AG04450 (cell line): ENCODE measurements at regions of chr14 and their contacts with region 1.

Region 1: GRCh38 chr14:93173943-93174395 is 10.7 kb downstream of the MOAP1 start:
- DNase-seq: no peak
- H3K4me3 ChIP-seq: no peak overlapping the region
- H3K27ac ChIP-seq: no peak overlapping the region
- H3K27me3 ChIP-seq: no peaks in the 10 kb centered on the region
- CTCF ChIP-seq: no peak

Region 2: DNA sequence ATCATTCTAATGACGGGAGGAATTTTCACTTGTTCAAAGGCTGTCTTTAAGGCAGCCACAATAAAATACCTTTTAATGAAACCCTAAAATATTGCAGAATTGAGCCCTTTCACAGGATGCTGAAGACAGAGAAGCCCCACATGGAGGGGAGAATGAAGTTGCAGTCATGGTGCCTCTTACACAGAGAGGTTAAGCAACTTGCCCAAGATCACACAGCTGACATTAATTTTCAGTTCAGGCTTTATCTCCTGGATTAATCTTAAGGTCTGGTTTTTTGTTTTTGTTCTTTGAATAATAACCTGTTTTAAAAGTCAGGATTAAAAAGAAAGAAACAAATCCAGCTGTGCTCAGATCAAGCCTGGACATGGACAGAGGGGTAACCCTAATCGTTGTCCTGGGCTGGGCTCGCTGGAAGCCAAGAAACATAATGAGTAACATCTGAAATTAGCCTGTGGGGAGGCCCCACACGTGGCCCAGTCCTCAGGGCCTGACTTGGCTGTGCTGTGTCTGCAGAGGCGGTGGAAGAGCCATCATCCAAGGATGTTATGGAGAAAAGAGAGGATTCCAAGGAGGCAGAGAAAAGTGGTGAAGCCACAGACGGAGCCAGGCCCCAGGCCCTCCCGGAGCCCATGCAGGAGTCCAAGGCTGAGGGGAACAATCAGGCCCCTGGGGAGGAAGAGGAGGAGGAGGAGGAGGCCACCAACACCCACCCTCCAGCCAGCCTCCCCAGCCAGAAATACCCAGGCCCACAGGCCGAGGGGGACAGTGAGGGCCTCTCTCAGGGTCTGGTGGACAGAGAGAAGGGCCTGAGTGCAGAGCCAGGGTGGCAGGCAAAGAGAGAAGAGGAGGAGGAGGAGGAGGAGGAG is 243.0 kb before region 1 on chr14:
- CTCF ChIA-PET with region 1: no interaction called
- POLR2A ChIA-PET with region 1: no interaction called
- DNase-seq: no peak
- H3K4me3 ChIP-seq: no peak overlapping the region
- H3K27ac ChIP-seq: no peak overlapping the region
- H3K27me3 ChIP-seq: peaks cover 2% of the 10 kb centered on the region
- CTCF ChIP-seq: no peak

Region 3: DNA sequence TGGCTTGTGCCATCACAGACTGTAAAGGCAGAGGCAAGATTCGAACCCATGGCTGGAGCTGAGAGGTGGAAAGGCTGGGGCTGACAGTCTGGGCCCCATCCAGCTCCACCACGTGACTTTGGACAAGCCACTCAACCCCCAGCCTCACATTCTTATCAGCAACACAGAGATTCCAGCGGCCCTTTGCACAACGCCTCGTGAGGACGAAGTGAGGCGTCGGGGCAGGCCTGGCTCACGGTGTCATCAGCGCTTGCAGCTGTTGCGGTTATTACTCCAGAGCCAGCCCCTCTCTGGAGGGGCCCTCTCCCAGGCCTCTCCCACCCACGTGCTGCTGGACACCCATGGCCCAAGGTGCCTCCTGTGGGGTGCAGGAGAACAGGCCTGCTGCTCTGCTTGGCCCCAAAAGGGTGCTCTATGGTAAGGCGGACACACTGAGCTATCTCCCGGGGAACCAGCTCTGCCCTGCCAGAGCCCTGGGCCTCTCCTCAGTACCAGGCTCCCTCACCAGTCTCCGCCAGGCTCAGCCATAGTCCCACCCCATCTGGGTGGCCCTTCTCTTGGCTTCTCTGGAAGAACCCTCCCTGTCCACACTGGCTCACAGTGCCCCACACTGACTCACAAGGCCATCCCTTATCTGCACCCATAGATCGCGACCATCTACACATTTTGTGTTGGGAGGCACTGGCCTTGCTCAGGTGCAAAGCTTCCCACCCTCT is 230.0 kb before region 1 on chr14:
- CTCF ChIA-PET with region 1: interaction called, 4 read pairs
- POLR2A ChIA-PET with region 1: interaction called, 11 read pairs
- DNase-seq: no peak
- H3K4me3 ChIP-seq: no peak overlapping the region
- H3K27ac ChIP-seq: no peak overlapping the region
- H3K27me3 ChIP-seq: no peaks in the 10 kb centered on the region
- CTCF ChIP-seq: no peak

Region 4: DNA sequence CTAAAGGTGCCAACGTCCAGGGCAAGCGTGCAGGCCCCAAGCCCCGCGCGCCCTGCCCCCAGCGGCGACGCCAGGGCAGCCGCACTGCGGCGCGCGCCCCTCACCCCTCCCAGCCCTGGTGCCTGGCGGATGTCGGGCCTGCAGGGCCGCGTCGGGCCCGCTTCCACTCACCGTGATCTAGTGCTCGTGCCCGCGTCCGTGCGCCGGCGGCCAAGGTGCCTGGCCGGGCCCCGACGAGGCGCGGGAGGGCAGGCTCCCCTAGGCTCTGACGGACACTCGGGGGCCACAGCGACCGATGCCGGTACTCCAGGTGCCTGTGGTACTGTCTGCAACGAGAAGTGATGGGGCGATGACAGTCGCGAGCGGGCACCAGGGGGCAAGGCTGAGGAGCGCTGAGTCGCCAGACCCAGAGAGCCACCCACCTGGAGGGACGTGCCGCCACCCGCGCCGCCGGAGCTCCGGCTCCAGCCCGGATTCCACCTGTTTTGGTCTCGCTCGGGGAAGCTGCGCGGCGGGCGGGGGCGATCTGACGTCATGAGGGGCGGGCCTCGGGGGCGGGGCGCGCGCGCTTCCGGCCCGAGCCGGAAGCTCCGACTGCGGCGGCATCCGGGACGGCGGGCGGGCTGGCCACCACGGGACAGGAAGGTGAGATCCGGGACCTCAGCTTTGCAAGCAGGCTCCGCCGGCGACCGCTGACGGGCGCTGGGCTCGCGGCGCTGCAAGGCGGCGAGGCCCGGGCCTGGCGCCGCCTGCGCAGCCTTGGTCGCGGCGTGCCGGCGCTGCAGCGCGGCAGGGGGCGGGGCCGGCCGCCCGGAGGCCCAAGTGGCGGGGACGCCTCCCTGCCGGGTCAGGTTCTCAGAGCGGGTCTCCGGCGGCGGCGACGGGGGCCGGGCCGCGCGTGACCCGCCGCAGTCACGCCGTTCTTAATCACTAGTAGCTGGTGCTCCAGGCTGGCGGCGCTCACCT is 10.7 kb after region 1 on chr14 and contains the starts of genes LYSET and MOAP1:
- CTCF ChIA-PET with region 1: interaction called, 9 read pairs
- POLR2A ChIA-PET with region 1: interaction called, 10 read pairs
- DNase-seq: peak; percentile 36
- H3K4me3 ChIP-seq: peak within 1 kb of the TSS; percentile 98
- H3K27ac ChIP-seq: peak within 1 kb of the TSS; percentile 69
- H3K27me3 ChIP-seq: no peaks in the 10 kb centered on the region
- CTCF ChIP-seq: no peak
- polyA plus RNA-seq, gene LYSET: 12.2 and 15.6 TPM in 2 replicates
- polyA plus RNA-seq, gene MOAP1: 16.7 and 21.0 TPM in 2 replicates